ENCODE measurements at regions of chr6 and their contacts with region 1.

Region 1: DNA sequence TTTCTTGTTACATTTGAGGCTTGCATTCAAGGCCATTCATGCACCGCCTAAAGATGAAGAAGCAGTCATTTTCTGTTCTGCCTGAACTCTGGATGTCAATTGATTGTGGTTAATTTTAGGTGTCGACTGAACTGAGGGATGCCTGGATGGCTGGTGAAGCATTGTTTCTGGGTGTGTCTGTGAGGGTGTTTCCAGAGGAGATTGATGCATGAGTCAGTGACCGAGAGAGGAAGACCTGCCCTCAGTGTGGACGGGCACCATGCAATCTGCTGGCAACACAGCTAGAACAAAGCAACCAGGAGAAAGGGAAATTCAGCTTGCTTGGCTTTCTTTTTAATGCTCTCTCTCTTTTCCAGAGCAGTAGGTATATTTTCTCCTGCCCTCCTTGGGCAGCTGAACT is 164.1 kb upstream of the ECI2 start:
- DNase-seq: peak; percentile 88
- H3K4me3 ChIP-seq: no peak overlapping the region
- H3K27ac ChIP-seq: peak overlapping the region; percentile 18
- H3K4me1 ChIP-seq: peaks cover 15% of the 10 kb centered on the region
- H3K27me3 ChIP-seq: no peaks in the 10 kb centered on the region
- CTCF ChIP-seq: no peak

Region 2: GRCh38 chr6:4281341-4282293 is 17.9 kb before region 1 on chr6:
- CTCF ChIA-PET with region 1: no interaction called
- dilution Hi-C with region 1: no loop called
- in situ Hi-C with region 1: no loop called
- intact Hi-C with region 1: loop called (anchors 2 kb)
- DNase-seq: peak; percentile 95
- H3K4me3 ChIP-seq: peak overlapping the region; percentile 25 to 47 (median 25)
- H3K27ac ChIP-seq: peak overlapping the region; percentile 15
- H3K4me1 ChIP-seq: peaks cover 19% of the 10 kb centered on the region
- H3K27me3 ChIP-seq: no peaks in the 10 kb centered on the region
- CTCF ChIP-seq: peak; percentile 41 to 62